ENCODE measurements at regions of chr4 and their contacts with region 1.

Region 1: GRCh38 chr4:15149839-15150476 is 147.7 kb downstream of the CPEB2 start:
- DNase-seq: peak; percentile 54
- CTCF ChIP-seq: no peak

Region 2: DNA sequence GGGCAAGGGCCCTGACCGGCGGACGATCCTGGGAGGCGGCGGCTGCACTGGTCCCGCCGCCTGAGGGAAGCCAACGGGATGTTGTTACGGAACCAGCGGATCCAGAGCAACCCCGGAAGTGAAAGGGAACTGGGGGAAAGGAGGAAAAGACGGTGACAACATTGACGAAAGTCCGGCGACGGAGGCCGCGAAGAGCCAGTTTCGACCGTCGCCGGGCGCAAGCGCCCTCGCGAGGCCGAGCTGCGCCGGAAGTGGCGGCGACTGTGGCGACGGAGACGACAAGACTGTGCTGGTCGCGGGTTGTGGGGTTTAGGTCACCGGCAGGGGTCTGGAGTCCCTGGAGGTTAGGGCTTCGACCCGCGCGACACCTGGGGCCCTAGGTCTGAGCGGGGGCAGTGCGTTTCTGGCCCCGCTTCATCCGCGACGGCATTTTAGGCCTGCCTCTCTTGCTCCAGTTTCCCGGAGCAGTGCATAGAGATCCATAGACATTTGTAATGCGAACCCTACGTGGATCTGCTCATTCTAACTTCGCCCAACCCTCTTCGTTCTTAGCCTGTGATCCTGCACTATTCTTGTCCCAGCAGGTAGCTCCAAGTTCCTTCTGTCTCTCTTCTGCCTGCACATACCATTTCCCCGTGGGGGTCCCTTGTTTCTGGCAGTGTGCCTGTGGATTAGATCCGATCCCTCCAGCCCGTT is 1522.2 kb before region 1 on chr4 and contains the start of gene BOD1L1:
- in situ Hi-C with region 1: loop called (anchors 25 kb)
- DNase-seq: peak; percentile 92
- CTCF ChIP-seq: peak; percentile 57

Region 3: GRCh38 chr4:14787894-14788293 is 362.1 kb before region 1 on chr4:
- in situ Hi-C with region 1: no loop called
- DNase-seq: no peak
- CTCF ChIP-seq: no peak

Region 4: GRCh38 chr4:14856076-14856933 is 293.7 kb before region 1 on chr4:
- in situ Hi-C with region 1: no loop called
- DNase-seq: peak; percentile 50
- CTCF ChIP-seq: no peak